ENCODE measurements at regions of chr10 and their contacts with region 1.

Region 1: GRCh38 chr10:95601116-95601719 is 40.0 kb upstream of the SORBS1 start:
- DNase-seq: peak; percentile 72
- ATAC-seq: peak; percentile 65
- H3K4me3 Mint-ChIP-seq: no peak overlapping the region
- H3K27ac Mint-ChIP-seq: no peak overlapping the region
- H3K4me1 Mint-ChIP-seq: no peaks in the 10 kb centered on the region
- H3K27me3 Mint-ChIP-seq: peaks cover 5% of the 10 kb centered on the region

Region 2: DNA sequence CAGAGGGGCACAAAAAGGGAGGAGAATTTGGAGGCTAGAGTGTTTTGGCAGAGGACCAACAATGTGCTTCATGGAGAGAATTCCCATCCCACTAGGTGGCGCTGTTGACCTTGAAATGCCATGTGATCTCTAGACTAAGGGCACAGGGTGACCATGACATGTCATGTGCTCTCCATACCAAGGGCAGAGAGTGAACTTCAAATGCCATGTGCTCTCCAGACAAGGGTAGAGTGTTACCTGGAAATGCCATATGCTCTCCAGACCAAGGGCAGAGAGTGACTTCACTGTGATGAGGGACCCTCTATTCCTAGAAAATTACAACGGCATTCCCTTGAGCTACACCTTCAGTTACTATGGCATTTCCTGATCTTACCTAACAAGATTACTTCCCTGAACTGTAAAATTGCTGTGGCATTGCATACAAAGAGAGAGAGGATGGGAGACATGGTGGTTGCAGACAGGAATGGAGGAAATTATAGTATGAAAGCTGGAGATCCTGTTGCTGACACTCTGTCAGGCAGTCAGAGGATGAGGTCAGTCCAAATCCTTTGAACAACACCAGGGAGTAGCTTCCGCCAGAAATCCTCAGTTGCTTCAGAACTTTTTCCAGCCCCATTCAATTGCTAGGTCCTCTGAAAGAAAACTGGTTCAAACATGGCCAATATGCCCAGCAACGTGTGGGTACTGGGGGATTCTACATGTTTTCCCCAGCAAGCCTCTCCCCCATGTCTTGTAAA is 468.0 kb before region 1 on chr10:
- CTCF ChIA-PET with region 1: no interaction called
- POLR2A ChIA-PET with region 1: no interaction called
- intact Hi-C with region 1: loop called in 1 of 2 experiments (anchors 10 kb)
- DNase-seq: peak; percentile 90
- ATAC-seq: peak; percentile 87
- H3K4me3 Mint-ChIP-seq: no peak overlapping the region
- H3K27ac Mint-ChIP-seq: no peak overlapping the region
- H3K4me1 Mint-ChIP-seq: no peaks in the 10 kb centered on the region
- H3K27me3 Mint-ChIP-seq: no peaks in the 10 kb centered on the region

Region 3: DNA sequence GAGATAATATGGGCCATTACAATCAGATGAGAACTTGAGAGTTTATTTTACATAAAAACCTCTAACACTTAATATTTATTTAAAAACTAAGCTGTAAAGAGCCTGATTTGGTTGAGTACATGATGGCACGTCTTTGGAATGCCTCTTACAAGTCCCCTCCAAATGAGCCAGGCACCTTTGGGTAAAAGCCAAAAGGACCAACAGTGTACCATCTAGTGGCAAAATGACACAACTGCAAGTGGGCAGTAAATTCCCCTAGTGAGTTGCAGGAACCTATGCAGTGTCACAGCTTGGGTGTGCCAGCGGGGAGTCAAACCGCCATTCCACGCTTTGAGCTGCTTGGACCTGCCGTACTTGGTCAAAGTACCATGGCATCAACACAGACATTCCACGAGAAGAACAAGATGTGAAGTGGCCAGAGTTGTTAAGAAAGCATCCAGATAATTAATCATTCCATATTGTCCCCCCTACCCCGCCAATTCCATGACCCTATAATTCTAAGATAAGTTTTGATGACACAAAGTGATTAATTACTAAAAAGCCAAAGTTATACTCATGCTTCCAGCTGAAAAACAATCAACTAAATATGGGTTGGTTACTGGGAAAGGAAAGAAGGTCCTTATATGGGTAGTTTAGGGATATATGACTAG is 155.3 kb before region 1 on chr10:
- CTCF ChIA-PET with region 1: interaction called, 10 read pairs
- POLR2A ChIA-PET with region 1: no interaction called
- intact Hi-C with region 1: loop called in 1 of 2 experiments (anchors 5 kb)
- DNase-seq: peak; percentile 50
- ATAC-seq: peak; percentile 73
- H3K4me3 Mint-ChIP-seq: no peak overlapping the region
- H3K27ac Mint-ChIP-seq: no peak overlapping the region
- H3K4me1 Mint-ChIP-seq: peaks cover 4% of the 10 kb centered on the region
- H3K27me3 Mint-ChIP-seq: peaks cover 6% of the 10 kb centered on the region

Region 4: DNA sequence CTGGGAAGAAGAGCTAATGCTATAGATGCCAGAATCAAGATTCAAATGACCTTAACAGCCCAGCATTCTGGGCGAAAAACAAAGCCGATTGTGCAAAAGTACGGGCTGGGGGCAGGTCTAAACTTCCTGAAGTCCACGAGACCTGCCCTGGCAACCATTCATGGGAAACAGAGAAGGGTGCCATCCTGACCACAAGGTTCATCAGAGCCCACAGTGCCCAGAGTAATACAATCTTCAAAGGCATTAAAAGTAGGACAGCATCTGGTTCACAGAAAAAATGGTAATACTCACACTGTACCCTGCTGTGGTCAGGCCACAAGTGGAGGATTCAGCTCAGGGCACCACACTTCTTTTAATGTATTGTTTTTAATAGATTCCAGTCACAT is 76.2 kb before region 1 on chr10:
- CTCF ChIA-PET with region 1: no interaction called
- POLR2A ChIA-PET with region 1: no interaction called
- intact Hi-C with region 1: loop called in 1 of 2 experiments (anchors 10 kb)
- DNase-seq: no peak
- ATAC-seq: no peak
- H3K4me3 Mint-ChIP-seq: no peak overlapping the region
- H3K27ac Mint-ChIP-seq: no peak overlapping the region
- H3K4me1 Mint-ChIP-seq: peaks cover 6% of the 10 kb centered on the region
- H3K27me3 Mint-ChIP-seq: peaks cover 11% of the 10 kb centered on the region

Measured in activated CD4-positive, alpha-beta T cell treated with anti-CD3 and anti-CD28 coated beads for 36 hours (primary cell).